Posterior vena cava (tissue), 2 donors: ENCODE measurements at regions of chr7 and their contacts with region 1.

Region 1: DNA sequence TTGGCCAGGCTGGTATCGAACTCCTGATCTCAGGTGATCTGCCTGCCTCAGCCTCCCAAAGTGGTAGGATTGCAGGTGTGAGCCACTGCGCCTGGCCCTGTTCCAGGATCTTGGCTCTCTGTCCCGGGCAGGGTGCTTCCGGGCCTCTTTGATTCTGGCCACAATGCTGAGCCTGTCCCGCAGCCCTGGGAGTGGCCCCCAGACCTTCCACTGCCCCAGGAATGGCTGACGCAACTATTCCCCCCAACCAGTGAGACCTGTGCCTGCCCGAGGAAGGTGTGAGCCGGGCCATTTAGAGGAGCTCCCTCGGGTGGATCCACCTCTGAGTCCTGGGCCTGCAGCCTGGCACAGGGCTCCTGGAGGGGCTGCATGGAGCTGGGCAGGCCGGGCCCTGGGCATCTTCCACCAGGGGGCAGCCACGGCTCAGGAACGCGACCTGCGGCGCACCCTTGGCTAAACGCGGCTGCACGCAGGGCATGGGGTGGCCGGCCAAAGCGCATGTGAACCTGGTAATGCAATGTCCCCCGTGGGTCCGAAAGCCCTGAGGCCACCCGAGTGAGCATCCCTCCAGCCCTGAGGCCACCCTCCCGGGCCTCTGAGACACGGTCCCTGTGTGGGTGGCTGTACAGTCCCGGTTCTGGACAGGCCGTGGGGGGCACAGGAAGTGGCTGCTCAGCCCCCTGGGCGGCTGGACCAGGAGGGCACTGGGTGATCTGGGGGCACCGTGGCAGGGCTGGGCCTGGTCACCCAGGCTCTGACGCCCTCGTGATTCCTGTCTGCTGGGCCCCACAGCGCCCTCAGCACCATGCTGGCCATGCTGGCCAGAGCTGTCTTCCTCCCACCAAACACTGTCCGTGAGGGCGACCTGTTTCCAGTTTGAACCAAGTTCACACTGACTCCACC is 24.8 kb downstream of the GRIFIN start:
- DNase-seq: peak; percentile 96

Region 2: GRCh38 chr7:2680792-2681490 is 229.5 kb after region 1 on chr7:
- intact Hi-C with region 1: loop called in 1 of 2 experiments (anchors 10 kb)
- DNase-seq: peak; percentile 94